BJ (cell line): ENCODE measurements at regions of chr10 and their contacts with region 1.

Region 1: GRCh38 chr10:32378363-32379317 is 31.7 kb upstream of the EPC1 start:
- DNase-seq: peak; percentile 48
- H3K4me3 ChIP-seq: peak overlapping the region; percentile 84
- H3K27me3 ChIP-seq: no peaks in the 10 kb centered on the region
- CTCF ChIP-seq: no peak

Region 2: DNA sequence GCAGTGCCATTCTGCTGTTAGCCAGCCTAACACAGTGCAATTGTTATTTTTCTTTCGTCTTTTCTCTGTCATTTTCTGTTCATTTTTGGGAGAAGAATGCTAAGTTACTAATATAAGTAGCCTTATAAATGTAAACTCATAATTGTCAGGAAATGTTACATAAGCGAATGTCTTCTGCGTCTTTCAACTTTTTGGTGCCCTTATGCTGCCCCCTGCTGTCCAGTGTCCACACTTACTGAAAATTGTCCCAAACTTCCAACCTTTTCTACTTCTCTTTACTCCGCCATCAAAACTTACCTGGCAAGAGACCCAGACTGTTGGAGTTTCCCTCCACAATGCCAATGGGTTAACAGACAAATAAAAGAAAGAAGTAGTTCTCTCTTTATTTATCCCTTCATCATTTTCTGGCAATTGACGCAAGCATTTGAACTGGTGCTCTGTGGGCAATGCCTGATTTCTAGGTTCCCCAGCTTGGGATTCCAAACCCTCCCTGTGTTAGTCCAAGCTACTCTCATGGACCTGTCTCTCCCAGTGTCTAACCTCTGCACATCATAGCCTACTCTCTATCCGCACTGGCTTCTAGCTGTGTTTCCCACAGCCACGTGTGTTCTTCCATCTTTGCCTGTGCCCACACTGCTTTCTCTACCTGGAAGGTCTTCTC is 10.7 kb before region 1 on chr10:
- CTCF ChIA-PET with region 1: interaction called, 10 read pairs
- POLR2A ChIA-PET with region 1: no interaction called
- DNase-seq: peak; percentile 12
- H3K4me3 ChIP-seq: no peak overlapping the region
- H3K27me3 ChIP-seq: no peaks in the 10 kb centered on the region
- CTCF ChIP-seq: peak; percentile 80